B cell (primary cell): ENCODE measurements at regions of chr4 and their contacts with region 1.

Region 1: GRCh38 chr4:39020130-39020529 is 12.1 kb downstream of the TMEM156 start:
- DNase-seq: no peak
- ATAC-seq: no peak
- H3K4me3 ChIP-seq: no peak overlapping the region
- H3K4me3 Mint-ChIP-seq: no peak overlapping the region
- H3K27ac ChIP-seq: peak overlapping the region in 1 of 2 donors; percentile 15
- H3K27ac Mint-ChIP-seq: peak overlapping the region; percentile 47
- H3K4me1 ChIP-seq: peaks cover 5 to 7% of the 10 kb centered on the region in 2 donors
- H3K4me1 Mint-ChIP-seq: peaks cover 49% of the 10 kb centered on the region
- H3K27me3 ChIP-seq: no peaks in the 10 kb centered on the region
- H3K27me3 Mint-ChIP-seq: no peaks in the 10 kb centered on the region
- CTCF ChIP-seq: no peak

Region 2: DNA sequence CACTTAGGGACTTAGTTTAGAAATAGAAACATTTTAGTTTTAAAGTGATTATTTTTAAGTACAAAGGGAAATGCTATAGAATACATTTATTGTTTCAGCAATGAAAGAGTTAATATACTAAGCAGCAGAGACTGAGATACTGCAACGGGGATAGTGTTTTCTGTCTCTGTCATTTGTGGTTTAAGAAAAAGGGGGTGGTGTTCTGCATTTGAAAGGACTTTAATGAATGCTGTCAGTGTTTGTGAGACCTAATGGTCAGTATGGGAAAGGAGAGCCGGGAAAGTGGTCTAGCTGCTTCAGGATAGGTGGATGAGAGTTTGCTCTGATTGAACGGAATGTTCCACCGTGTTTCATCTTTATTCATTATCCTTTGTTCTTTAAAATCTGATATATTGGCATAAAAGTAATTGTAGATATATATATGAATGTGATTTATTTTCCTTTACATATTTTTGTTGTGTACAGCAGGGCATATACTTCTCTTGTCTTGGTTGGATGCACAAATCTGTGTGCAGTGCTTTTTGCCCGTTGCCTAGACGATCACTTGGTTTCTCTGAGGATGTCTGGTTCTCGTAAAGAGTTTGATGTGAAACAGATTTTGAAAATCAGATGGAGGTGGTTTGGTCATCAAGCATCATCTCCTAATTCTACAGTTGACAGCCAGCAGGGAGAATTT is 42.1 kb after region 1 on chr4 and contains the start of gene KLHL5:
- CTCF ChIA-PET with region 1: no interaction called
- POLR2A ChIA-PET with region 1: no interaction called
- intact Hi-C with region 1: loop called (anchors 5 kb)
- DNase-seq: no peak
- ATAC-seq: no peak
- H3K4me3 ChIP-seq: no peak within 1 kb of the TSS
- H3K4me3 Mint-ChIP-seq: peak within 1 kb of the TSS; percentile 17
- H3K27ac ChIP-seq: no peak within 1 kb of the TSS
- H3K27ac Mint-ChIP-seq: peak within 1 kb of the TSS; percentile 50
- H3K4me1 ChIP-seq: peaks cover 10 to 23% of the 10 kb centered on the region in 2 donors
- H3K4me1 Mint-ChIP-seq: peaks cover 36% of the 10 kb centered on the region
- H3K27me3 ChIP-seq: no peaks in the 10 kb centered on the region
- H3K27me3 Mint-ChIP-seq: no peaks in the 10 kb centered on the region
- CTCF ChIP-seq: no peak
- total RNA-seq, gene KLHL5: 90.0 and 95.5 TPM in 2 replicates